ENCODE measurements at regions of chr6 and their contacts with region 1.

Region 1: GRCh38 chr6:144215932-144216667 is 65.8 kb downstream of the STX11 start:
- DNase-seq: peak; percentile 95 to 96 (median 96)
- ATAC-seq: peak; percentile 95
- H3K4me3 ChIP-seq: peak overlapping the region; percentile 51
- H3K4me1 ChIP-seq: peaks cover 11% of the 10 kb centered on the region
- CTCF ChIP-seq: peak; percentile 54

Region 2: GRCh38 chr6:144104898-144105487 is 111.1 kb before region 1 on chr6:
- intact Hi-C with region 1: loop called (anchors 5 kb)
- DNase-seq: peak in 1 of 3 donors; percentile 83
- ATAC-seq: peak; percentile 63
- H3K4me3 ChIP-seq: no peak overlapping the region
- H3K4me1 ChIP-seq: no peaks in the 10 kb centered on the region
- CTCF ChIP-seq: peak; percentile 17

Region 3: GRCh38 chr6:144284783-144285547 is 68.9 kb after region 1 on chr6 and contains the start of gene UTRN:
- intact Hi-C with region 1: loop called in 1 of 2 experiments (anchors 10 kb)
- DNase-seq: peak; percentile 79 to 87 (median 86)
- ATAC-seq: peak; percentile 81
- H3K4me3 ChIP-seq: peak within 1 kb of the TSS; percentile 35
- H3K4me1 ChIP-seq: peaks cover 5% of the 10 kb centered on the region
- CTCF ChIP-seq: no peak
- total RNA-seq, gene UTRN: 88.9 to 107 (median 94.0) TPM